ENCODE measurements at regions of chr9 and their contacts with region 1.

Region 1: GRCh38 chr9:71670121-71670520 is 98.2 kb downstream of the CEMIP2 start:
- DNase-seq: no peak
- ATAC-seq: no peak

Region 2: DNA sequence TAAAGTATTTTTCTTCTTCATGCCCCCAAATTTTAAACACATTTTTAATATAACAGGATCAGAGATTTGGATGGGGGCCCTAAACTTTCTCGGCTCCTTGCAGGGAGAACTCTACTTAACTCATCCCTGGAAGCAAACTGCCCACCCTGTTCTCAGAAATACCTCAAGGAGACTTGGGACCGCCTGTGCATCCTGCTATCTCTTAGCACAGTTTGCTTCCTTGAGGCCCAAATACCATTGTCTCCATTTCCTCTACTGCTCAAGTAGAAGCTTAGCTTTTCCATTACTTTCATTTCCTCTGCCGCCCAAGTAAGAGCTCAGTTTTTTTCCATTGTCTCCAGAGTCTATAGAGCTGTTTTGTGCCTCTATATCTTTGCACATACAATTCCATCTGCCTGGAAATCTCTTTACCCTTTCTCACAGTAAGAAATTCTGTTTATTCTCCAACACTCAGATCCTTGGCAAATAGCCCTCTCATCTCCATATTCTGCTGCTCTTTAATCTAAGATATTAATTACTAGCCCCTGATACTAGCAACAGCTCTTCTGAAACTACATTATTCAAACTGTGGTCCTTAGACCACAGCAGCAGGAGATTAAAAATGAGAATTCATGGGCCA is 39.6 kb before region 1 on chr9:
- intact Hi-C with region 1: loop called (anchors 5 kb)
- DNase-seq: no peak
- ATAC-seq: peak; percentile 31

Region 3: DNA sequence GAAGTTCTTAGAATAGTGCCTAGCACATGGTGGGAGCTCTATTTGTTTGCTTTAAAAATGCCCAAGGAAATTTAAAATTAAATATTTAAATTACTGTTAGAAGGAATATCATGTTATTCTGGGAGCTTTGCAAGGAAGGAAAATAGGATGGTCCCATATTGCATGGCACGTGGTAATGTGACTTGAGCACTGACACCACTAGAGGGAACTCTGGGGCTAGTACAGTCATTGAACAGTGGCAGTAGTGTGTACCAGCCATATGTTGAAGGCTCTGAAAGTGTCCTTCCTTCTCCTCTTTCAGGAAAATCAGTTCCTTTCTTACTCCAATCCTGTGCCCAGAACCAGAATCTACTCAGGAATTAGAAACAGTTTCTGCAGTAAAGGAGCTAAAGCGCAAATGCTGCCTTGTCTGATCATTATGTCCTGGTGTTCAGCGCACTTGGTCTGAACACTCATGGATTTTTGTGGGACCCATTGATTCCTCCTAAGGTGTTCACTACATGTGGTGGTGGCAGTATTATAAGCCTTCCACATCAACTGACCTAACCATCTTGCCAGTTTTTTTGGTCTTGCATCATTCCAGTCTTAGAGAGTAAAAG is 533.2 kb after region 1 on chr9:
- intact Hi-C with region 1: no loop called
- DNase-seq: no peak
- ATAC-seq: no peak

Measured in Right ventricle myocardium inferior (tissue), 1 donor.